BJ (cell line): ENCODE measurements at regions of chr1 and their contacts with region 1.

Region 1: GRCh38 chr1:30353637-30354036 is 369.7 kb downstream of the MATN1 start:
- DNase-seq: no peak
- H3K4me3 ChIP-seq: no peak overlapping the region
- H3K27me3 ChIP-seq: no peaks in the 10 kb centered on the region
- CTCF ChIP-seq: peak; percentile 53

Region 2: GRCh38 chr1:30366911-30367310 is 13.3 kb after region 1 on chr1:
- CTCF ChIA-PET with region 1: interaction called, 10 read pairs
- POLR2A ChIA-PET with region 1: no interaction called
- DNase-seq: no peak
- H3K4me3 ChIP-seq: no peak overlapping the region
- H3K27me3 ChIP-seq: peaks cover 2% of the 10 kb centered on the region; the same call in 1 of the 2 replicates
- CTCF ChIP-seq: no peak

Region 3: GRCh38 chr1:30670240-30671060 is 316.8 kb after region 1 on chr1:
- CTCF ChIA-PET with region 1: no interaction called
- POLR2A ChIA-PET with region 1: no interaction called
- DNase-seq: peak; percentile 74
- H3K4me3 ChIP-seq: no peak overlapping the region
- H3K27me3 ChIP-seq: no peaks in the 10 kb centered on the region
- CTCF ChIP-seq: no peak